Aorta (tissue), 5 donors: ENCODE measurements at regions of chr22 and their contacts with region 1.

Region 1: DNA sequence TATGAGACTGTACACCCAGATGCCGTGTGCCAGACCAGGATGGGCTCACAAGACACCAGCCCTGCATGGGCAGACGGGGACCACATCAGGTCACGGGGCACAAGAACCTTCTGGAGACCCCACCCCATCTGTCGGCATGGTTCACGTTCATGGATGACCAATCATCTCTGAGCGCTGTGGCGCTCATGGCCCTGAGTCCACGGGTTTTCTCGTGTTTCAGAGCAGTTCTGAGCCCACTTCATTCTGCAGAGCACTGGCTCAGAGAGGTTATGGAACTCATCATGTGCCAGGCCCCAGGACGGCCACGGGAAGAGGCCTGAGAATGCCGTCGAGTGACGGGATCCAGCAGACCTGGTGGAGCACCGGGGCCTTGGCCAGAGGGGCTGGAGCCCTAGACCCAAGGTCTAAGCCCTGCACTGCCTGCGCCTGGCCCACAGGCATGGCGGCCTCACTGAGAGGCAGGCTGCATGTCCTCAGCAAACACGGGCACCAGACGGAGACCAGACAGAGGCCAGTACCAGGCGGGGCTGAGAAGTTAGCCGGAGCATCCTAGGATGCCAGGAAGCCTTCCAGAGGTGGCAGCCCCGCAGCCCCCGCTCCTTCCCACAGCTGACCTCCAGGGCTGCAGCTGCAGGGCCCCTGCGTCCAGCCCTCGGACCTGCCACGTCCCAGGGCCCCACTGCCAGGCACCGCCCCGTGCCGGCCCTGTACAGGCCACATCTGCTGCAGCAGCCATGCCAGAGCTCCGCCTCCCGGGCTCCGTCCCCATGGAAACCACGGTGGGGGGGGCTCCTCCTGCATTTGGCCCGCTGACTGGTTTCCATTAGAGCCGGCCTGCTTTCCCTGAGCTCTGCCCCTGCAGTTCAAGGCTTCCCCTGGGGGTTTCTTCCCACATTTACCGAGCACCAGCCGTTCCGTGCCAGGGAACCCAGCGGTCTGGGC is 62.7 kb upstream of the PPARA start:
- DNase-seq: peak; percentile 94 to 95
- ATAC-seq: peak; percentile 89
- H3K4me3 ChIP-seq: no peak overlapping the region
- H3K27ac ChIP-seq: peak overlapping the region; percentile 68 to 73
- H3K4me1 ChIP-seq: peaks cover 0 to 6% of the 10 kb centered on the region in 2 donors
- H3K27me3 ChIP-seq: no peaks in the 10 kb centered on the region

Region 2: DNA sequence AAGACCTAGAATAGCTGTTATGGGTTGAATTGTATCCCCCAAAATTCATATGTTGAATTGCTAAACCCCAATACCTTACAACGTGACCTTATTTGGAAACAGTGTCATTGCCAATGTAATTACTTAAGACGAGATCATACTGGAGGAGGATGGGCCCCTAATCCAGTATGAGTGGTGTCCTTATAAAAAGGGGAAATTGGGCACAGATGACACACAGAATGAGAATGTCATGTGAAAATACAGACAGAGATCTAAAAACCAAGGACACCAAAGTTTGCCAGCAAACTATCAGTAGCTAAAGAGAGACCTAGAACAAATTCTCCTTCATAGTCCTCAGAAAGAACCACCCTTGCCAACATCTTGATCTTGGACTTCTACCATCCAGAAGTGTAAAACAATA is 288.3 kb before region 1 on chr22:
- intact Hi-C with region 1: no loop called
- DNase-seq: no peak
- ATAC-seq: no peak
- H3K4me3 ChIP-seq: no peak overlapping the region
- H3K27ac ChIP-seq: no peak overlapping the region
- H3K4me1 ChIP-seq: no peaks in the 10 kb centered on the region
- H3K27me3 ChIP-seq: no peaks in the 10 kb centered on the region

Region 3: DNA sequence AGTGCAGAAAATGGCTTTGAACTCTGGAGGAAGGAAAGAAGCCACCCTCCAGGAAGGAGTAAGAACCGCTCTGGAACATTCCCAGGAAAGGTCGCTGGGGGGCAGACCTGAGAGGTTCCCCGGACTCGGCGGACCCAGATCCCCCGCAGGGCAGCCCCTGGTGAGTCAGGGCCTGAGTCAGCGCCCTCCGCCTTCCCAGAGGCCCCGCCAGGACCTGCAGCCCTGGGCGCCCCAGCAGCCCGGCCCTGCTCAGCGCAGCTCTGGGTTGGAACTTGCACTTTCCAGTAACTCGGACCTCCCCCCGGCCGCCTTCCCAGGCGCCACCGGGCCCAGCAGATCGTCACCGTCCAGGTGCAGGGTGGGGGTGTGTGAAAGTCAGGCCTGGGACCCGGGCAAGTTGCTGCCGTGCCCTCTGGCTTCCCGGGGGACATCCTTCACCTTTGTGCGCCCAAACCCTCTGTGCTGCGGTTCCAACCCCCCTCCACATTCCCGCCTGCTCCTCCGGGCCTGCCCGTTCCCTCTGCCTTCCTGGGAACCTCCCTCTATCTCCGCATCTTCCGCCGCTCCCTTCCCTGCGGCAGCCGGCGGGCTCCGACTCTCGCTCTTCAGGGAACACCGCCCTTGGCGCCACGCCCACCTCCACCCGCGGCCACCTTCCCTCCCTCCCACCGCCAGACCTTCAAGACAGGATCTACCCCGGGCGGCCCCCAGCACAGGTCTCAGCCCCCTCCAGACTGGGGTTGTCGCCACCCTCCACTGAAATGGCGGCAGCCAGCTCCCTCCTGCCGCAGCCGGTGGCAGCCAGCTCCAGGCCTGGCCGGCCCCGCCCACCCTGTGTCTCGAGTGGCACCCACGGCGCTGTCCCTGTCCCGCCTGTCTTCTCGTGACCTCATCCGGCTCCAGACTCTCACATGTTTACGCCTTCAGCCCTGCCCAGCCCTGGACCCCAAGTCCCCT is 73.9 kb before region 1 on chr22:
- intact Hi-C with region 1: no loop called
- DNase-seq: peak; percentile 98 to 99
- ATAC-seq: peak; percentile 96
- H3K4me3 ChIP-seq: peak overlapping the region in 1 of 2 donors; percentile 46
- H3K27ac ChIP-seq: peak overlapping the region; percentile 90 to 97
- H3K4me1 ChIP-seq: no peaks in the 10 kb centered on the region
- H3K27me3 ChIP-seq: no peaks in the 10 kb centered on the region

Region 4: GRCh38 chr22:46044621-46045438 is 42.8 kb before region 1 on chr22:
- intact Hi-C with region 1: loop called in 1 of 2 experiments (anchors 5 kb)
- DNase-seq: peak; percentile 66 to 82
- ATAC-seq: peak; percentile 39
- H3K4me3 ChIP-seq: peak overlapping the region; percentile 37 to 73
- H3K27ac ChIP-seq: peak overlapping the region; percentile 77 to 83
- H3K4me1 ChIP-seq: no peaks in the 10 kb centered on the region
- H3K27me3 ChIP-seq: no peaks in the 10 kb centered on the region

Region 5: DNA sequence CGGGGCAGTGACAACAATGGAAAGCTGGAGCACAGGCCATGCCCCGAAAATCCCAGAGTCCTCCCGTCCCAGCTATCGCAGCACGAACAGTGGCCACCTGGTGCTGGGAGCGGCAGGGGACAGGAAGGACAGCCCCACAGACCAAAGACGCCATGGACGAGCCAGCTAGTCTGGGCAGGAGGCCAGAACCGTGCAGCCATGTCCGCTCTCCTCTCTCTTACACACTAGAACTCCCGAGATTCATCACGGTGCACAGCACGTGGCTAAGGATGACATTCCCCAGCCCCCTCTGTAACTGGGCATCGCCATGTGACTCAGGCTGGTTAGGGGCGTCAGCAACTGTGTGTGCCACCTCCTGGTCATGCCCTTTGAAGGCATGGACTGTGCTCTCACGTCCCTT is 157.9 kb after region 1 on chr22:
- intact Hi-C with region 1: no loop called
- DNase-seq: peak in 1 of 2 donors; percentile 74
- ATAC-seq: peak; percentile 2
- H3K4me3 ChIP-seq: no peak overlapping the region
- H3K27ac ChIP-seq: no peak overlapping the region
- H3K4me1 ChIP-seq: no peaks in the 10 kb centered on the region
- H3K27me3 ChIP-seq: no peaks in the 10 kb centered on the region